Pancreas (tissue), 10 donors: ENCODE measurements at regions of chr12 and their contacts with region 1.

Region 1: GRCh38 chr12:115752913-115753726 is 524.4 kb downstream of the MED13L start:
- DNase-seq: peak in 3 of 6 donors; percentile 6 to 45 (median 16)
- ATAC-seq: peak in 3 of 4 donors; percentile 83 to 89 (median 87)
- H3K4me3 ChIP-seq: no peak overlapping the region
- H3K27ac ChIP-seq: no peak overlapping the region
- H3K4me1 ChIP-seq: no peaks in the 10 kb centered on the region
- H3K27me3 ChIP-seq: peaks cover 0 to 29% (median 0%) of the 10 kb centered on the region in 4 donors
- CTCF ChIP-seq: peak in 3 of 4 donors; percentile 29 to 43 (median 37)

Region 2: DNA sequence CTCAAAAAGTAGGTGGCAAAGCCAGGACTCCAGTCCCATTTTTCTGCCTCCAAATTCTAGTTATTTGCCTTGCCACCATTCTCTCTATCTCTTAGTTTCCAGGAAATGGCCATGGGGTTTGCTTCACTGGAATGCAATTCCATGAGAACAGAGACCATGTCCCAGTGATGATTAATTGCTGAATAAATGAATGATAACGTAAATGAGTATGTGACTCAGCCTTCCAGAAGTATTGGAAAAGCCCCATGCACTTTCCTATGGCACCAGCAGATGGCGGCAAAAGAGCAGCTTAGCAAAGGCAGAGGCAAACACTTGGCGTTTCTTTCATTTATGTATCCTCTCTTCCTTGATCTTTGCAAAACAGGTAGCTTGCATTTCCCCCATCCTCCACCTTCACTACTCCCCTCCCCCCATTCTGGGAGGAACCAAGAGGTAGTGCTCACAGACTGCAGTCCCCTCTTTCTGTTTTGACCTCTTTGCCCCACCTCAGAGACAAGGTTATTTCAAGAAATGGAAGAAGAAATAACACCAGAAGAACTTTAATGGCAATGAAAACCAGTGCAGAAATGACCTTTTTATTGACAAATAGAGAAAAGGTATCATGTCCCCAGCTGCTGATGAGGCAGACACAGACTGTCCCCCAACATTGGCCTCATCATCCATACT is 1090.5 kb before region 1 on chr12:
- intact Hi-C with region 1: loop called in 2 of 3 experiments (anchors 5 to 10 kb)
- DNase-seq: peak; percentile 64 to 91 (median 80)
- ATAC-seq: peak; percentile 83 to 93 (median 89)
- H3K4me3 ChIP-seq: no peak overlapping the region
- H3K27ac ChIP-seq: peak overlapping the region in 1 of 4 donors; percentile 21
- H3K4me1 ChIP-seq: no peaks in the 10 kb centered on the region
- H3K27me3 ChIP-seq: peaks cover 0 to 36% (median 13%) of the 10 kb centered on the region in 4 donors
- CTCF ChIP-seq: peak; percentile 88 to 94 (median 94)

Region 3: GRCh38 chr12:114668151-114668885 is 1084.8 kb before region 1 on chr12:
- intact Hi-C with region 1: loop called in 2 of 3 experiments (anchors 5 to 10 kb)
- DNase-seq: peak; percentile 63 to 90 (median 78)
- ATAC-seq: peak; percentile 92 to 97 (median 95)
- H3K4me3 ChIP-seq: peak overlapping the region in 1 of 4 donors; percentile 33
- H3K27ac ChIP-seq: no peak overlapping the region
- H3K4me1 ChIP-seq: peaks cover 0 to 3% (median 0%) of the 10 kb centered on the region in 3 donors
- H3K27me3 ChIP-seq: peaks cover 0 to 74% (median 18%) of the 10 kb centered on the region in 4 donors
- CTCF ChIP-seq: peak in 3 of 4 donors; percentile 13 to 45 (median 29)

Region 4: DNA sequence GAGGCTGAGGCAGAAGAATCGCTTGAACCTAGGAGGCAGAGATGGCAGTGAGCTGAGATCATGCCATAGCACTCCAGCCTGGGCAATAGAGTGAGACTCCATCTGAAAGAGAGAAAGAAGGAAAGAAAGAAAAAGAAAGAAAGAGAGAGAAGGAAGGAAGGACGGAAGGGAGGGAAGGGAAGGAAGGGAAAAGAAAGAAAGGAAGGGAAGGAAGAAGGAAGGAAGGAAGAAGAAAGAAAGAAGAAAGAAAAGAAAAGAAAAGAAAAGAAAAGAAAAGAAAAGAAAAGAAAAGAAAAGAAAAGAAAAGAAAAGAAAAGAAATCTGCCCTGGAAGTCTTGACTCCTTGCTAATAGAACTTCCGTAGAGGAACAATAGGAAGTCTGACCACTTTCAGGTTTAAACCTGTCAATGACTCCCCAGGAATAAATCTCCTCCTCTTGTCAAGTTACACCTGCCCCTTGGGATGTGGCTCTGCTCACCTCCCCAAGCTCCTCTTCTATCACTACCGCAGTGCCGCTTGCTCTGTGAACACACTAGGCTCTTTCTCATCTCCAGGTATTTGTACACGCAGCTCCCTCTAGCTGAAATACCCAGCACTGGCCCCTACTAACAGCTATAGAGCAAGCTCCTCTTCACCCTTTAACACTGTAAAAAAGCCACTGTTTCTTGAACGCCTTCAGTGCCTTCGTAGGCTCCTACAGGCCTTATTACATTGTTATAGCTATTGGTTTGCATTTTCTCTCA is 296.0 kb before region 1 on chr12:
- intact Hi-C with region 1: no loop called
- DNase-seq: no peak
- ATAC-seq: no peak
- H3K4me3 ChIP-seq: no peak overlapping the region
- H3K27ac ChIP-seq: no peak overlapping the region
- H3K4me1 ChIP-seq: no peaks in the 10 kb centered on the region
- H3K27me3 ChIP-seq: no peaks in the 10 kb centered on the region
- CTCF ChIP-seq: no peak